CD4-positive, alpha-beta memory T cell (primary cell): ENCODE measurements at regions of chr12 and their contacts with region 1.

Region 1: GRCh38 chr12:8949342-8950220 is at the start of gene M6PR:
- DNase-seq: peak; percentile 89 to 92 (median 91)
- H3K4me3 ChIP-seq: peak within 1 kb of the TSS; percentile 96 to 99
- H3K4me3 Mint-ChIP-seq: peak within 1 kb of the TSS; percentile 86 to 97 (median 96)
- H3K27ac ChIP-seq: peak within 1 kb of the TSS; percentile 96
- H3K27ac Mint-ChIP-seq: peak within 1 kb of the TSS; percentile 87 to 99 (median 95)
- H3K4me1 ChIP-seq: peaks cover 64% of the 10 kb centered on the region
- H3K4me1 Mint-ChIP-seq: peaks cover 51 to 84% (median 65%) of the 10 kb centered on the region in 4 donors
- H3K27me3 ChIP-seq: no peaks in the 10 kb centered on the region
- H3K27me3 Mint-ChIP-seq: no peaks in the 10 kb centered on the region
- total RNA-seq, gene M6PR: 226 to 247 TPM

Region 2: GRCh38 chr12:8609061-8609570 is 340.5 kb before region 1 on chr12:
- CTCF ChIA-PET with region 1: no interaction called
- POLR2A ChIA-PET with region 1: no interaction called
- intact Hi-C with region 1: no loop called
- DNase-seq: peak in 3 of 5 donors; percentile 2 to 10 (median 6)
- H3K4me3 ChIP-seq: no peak overlapping the region
- H3K4me3 Mint-ChIP-seq: peak overlapping the region; percentile 52 to 80 (median 72)
- H3K27ac ChIP-seq: no peak overlapping the region
- H3K27ac Mint-ChIP-seq: peak overlapping the region in 3 of 7 donors; percentile 3 to 57 (median 38)
- H3K4me1 ChIP-seq: peaks cover 5% of the 10 kb centered on the region
- H3K4me1 Mint-ChIP-seq: peaks cover 10 to 21% (median 15%) of the 10 kb centered on the region in 4 donors
- H3K27me3 ChIP-seq: no peaks in the 10 kb centered on the region
- H3K27me3 Mint-ChIP-seq: peaks cover 4% of the 10 kb centered on the region in 2 donors

Region 3: GRCh38 chr12:8629486-8630033 is 320.0 kb before region 1 on chr12:
- CTCF ChIA-PET with region 1: no interaction called
- POLR2A ChIA-PET with region 1: no interaction called
- intact Hi-C with region 1: no loop called
- DNase-seq: no peak
- H3K4me3 ChIP-seq: no peak overlapping the region
- H3K4me3 Mint-ChIP-seq: no peak overlapping the region
- H3K27ac ChIP-seq: no peak overlapping the region
- H3K27ac Mint-ChIP-seq: no peak overlapping the region
- H3K4me1 ChIP-seq: no peaks in the 10 kb centered on the region
- H3K4me1 Mint-ChIP-seq: no peaks in the 10 kb centered on the region
- H3K27me3 ChIP-seq: no peaks in the 10 kb centered on the region
- H3K27me3 Mint-ChIP-seq: peaks cover 0 to 2% of the 10 kb centered on the region in 2 donors

Region 4: GRCh38 chr12:8681041-8681902 is 268.3 kb before region 1 on chr12:
- CTCF ChIA-PET with region 1: interaction called, 21 read pairs
- POLR2A ChIA-PET with region 1: interaction called, 4 read pairs
- intact Hi-C with region 1: loop called (anchors 5 kb)
- DNase-seq: no peak
- H3K4me3 ChIP-seq: no peak overlapping the region
- H3K4me3 Mint-ChIP-seq: no peak overlapping the region
- H3K27ac ChIP-seq: no peak overlapping the region
- H3K27ac Mint-ChIP-seq: peak overlapping the region in 1 of 7 donors; percentile 30
- H3K4me1 ChIP-seq: no peaks in the 10 kb centered on the region
- H3K4me1 Mint-ChIP-seq: peaks cover 0 to 9% (median 5%) of the 10 kb centered on the region in 4 donors
- H3K27me3 ChIP-seq: no peaks in the 10 kb centered on the region
- H3K27me3 Mint-ChIP-seq: peaks cover 5 to 10% of the 10 kb centered on the region in 2 donors

Region 5: GRCh38 chr12:8742501-8742900 is 207.1 kb before region 1 on chr12:
- CTCF ChIA-PET with region 1: no interaction called
- POLR2A ChIA-PET with region 1: no interaction called
- intact Hi-C with region 1: no loop called
- DNase-seq: no peak
- H3K4me3 ChIP-seq: no peak overlapping the region
- H3K4me3 Mint-ChIP-seq: no peak overlapping the region
- H3K27ac ChIP-seq: no peak overlapping the region
- H3K27ac Mint-ChIP-seq: no peak overlapping the region
- H3K4me1 ChIP-seq: no peaks in the 10 kb centered on the region
- H3K4me1 Mint-ChIP-seq: peaks cover 0 to 2% (median 0%) of the 10 kb centered on the region in 4 donors
- H3K27me3 ChIP-seq: no peaks in the 10 kb centered on the region
- H3K27me3 Mint-ChIP-seq: no peaks in the 10 kb centered on the region

Region 6: GRCh38 chr12:8905546-8905945 is 44.0 kb before region 1 on chr12:
- CTCF ChIA-PET with region 1: interaction called, 12 read pairs
- POLR2A ChIA-PET with region 1: interaction called, 3 read pairs
- intact Hi-C with region 1: no loop called
- DNase-seq: no peak
- H3K4me3 ChIP-seq: no peak overlapping the region
- H3K4me3 Mint-ChIP-seq: no peak overlapping the region
- H3K27ac ChIP-seq: no peak overlapping the region
- H3K27ac Mint-ChIP-seq: no peak overlapping the region
- H3K4me1 ChIP-seq: no peaks in the 10 kb centered on the region
- H3K4me1 Mint-ChIP-seq: peaks cover 0 to 3% (median 0%) of the 10 kb centered on the region in 4 donors
- H3K27me3 ChIP-seq: no peaks in the 10 kb centered on the region
- H3K27me3 Mint-ChIP-seq: peaks cover 0 to 6% of the 10 kb centered on the region in 2 donors

Region 7: GRCh38 chr12:8989413-8989812 is 39.8 kb after region 1 on chr12 and contains the start of gene KLRG1:
- CTCF ChIA-PET with region 1: interaction called, 19 read pairs
- POLR2A ChIA-PET with region 1: interaction called, 25 read pairs
- intact Hi-C with region 1: loop called (anchors 1 kb)
- DNase-seq: peak in 4 of 5 donors; percentile 15 to 57 (median 26)
- H3K4me3 ChIP-seq: peak within 1 kb of the TSS in 1 of 2 donors; percentile 22
- H3K4me3 Mint-ChIP-seq: peak within 1 kb of the TSS; percentile 66 to 99 (median 89)
- H3K27ac ChIP-seq: peak within 1 kb of the TSS; percentile 24
- H3K27ac Mint-ChIP-seq: peak within 1 kb of the TSS; percentile 86 to 96 (median 92)
- H3K4me1 ChIP-seq: peaks cover 76% of the 10 kb centered on the region
- H3K4me1 Mint-ChIP-seq: peaks cover 46 to 72% (median 57%) of the 10 kb centered on the region in 4 donors
- H3K27me3 ChIP-seq: no peaks in the 10 kb centered on the region
- H3K27me3 Mint-ChIP-seq: no peaks in the 10 kb centered on the region
- total RNA-seq, gene KLRG1: 51.2 to 55.8 TPM

Region 8: DNA sequence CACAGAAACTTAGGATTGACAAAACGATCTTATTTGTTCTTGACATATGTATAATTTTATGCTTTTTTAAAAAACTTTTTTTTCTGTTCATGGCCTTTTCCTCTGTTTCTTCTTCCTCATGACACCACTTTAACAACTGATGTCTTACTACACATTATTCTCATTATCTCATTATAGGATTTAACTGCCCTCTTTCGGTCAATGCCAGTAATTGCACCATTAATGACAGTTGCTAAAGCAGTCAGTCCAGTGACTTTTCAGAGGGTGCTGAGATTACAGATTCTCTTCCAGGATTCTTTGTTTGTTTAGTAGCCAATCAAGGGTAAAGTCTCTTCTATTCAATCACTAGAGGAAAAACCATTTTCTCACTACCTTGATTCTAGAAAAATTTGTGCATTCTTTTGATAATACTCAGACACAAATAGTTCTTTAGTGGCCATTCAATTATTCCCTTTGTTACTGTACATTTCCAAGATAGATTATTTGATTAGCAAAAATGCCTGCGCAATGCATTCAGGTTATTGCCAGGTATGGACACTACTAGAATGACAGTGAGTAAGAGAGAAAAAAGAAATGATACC is 89.9 kb after region 1 on chr12:
- CTCF ChIA-PET with region 1: interaction called, 561 read pairs
- POLR2A ChIA-PET with region 1: interaction called, 492 read pairs
- intact Hi-C with region 1: loop called (anchors 1 kb)
- DNase-seq: peak in 4 of 5 donors; percentile 67 to 75 (median 70)
- H3K4me3 ChIP-seq: no peak overlapping the region
- H3K4me3 Mint-ChIP-seq: peak overlapping the region in 6 of 8 donors; percentile 5 to 57 (median 50)
- H3K27ac ChIP-seq: peak overlapping the region; percentile 2
- H3K27ac Mint-ChIP-seq: peak overlapping the region; percentile 38 to 82 (median 66)
- H3K4me1 ChIP-seq: peaks cover 68% of the 10 kb centered on the region
- H3K4me1 Mint-ChIP-seq: peaks cover 45 to 84% (median 64%) of the 10 kb centered on the region in 4 donors
- H3K27me3 ChIP-seq: no peaks in the 10 kb centered on the region
- H3K27me3 Mint-ChIP-seq: no peaks in the 10 kb centered on the region

Region 9: GRCh38 chr12:9227950-9228349 is 278.4 kb after region 1 on chr12:
- CTCF ChIA-PET with region 1: no interaction called
- POLR2A ChIA-PET with region 1: no interaction called
- intact Hi-C with region 1: no loop called
- DNase-seq: no peak
- H3K4me3 ChIP-seq: no peak overlapping the region
- H3K4me3 Mint-ChIP-seq: no peak overlapping the region
- H3K27ac ChIP-seq: no peak overlapping the region
- H3K27ac Mint-ChIP-seq: no peak overlapping the region
- H3K4me1 ChIP-seq: no peaks in the 10 kb centered on the region
- H3K4me1 Mint-ChIP-seq: peaks cover 0 to 1% (median 0%) of the 10 kb centered on the region in 4 donors
- H3K27me3 ChIP-seq: no peaks in the 10 kb centered on the region
- H3K27me3 Mint-ChIP-seq: no peaks in the 10 kb centered on the region